ENCODE measurements at regions of chr21 and their contacts with region 1.

Region 1: DNA sequence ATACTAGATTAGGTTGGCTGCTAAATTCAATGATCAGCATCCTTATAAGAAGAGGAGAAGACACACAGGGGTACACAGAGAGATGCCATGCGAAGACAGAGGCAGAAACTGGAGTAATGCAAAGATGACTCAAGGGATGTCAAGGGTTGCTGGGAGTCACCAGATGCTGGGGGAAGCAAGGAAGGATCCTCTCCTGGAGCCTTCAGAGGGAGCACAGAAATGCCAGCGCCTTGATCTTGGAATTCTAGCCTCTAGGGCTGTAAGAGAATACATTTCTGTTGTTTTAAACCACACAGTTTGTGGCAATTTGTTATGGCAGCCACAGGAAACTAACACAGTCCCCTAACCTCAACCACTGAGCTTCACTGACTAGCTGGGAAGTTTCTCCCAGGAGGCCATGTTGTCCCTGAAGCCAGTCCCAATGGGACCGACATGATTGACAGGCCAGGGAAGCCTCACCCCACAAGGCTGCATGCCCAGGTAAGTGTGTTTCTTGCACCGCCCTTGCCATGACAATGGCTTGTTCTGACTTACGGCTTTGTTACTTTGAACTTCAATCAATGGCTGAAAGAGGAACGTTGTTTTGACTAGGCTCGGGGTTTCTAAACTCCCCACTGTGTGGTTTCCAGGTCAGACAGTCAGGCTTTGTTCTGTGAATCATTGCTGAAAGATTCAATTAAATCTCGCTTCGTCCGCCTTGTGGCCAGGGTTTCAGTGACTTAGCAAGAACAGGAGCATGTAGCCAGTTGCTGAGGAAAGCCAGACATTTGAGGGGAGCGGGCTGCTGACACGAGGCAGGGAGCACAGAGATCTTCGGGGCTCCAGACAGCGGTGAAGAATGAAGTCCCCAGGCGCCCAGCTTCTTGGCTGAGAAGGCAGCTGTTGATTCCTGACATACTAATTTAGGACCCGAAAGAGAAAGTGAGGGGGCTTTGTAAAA is 62.3 kb downstream of the RUNX1 start:
- DNase-seq: peak; percentile 90
- H3K4me3 Mint-ChIP-seq: peak overlapping the region; percentile 86
- H3K27ac Mint-ChIP-seq: peak overlapping the region; percentile 97
- H3K4me1 Mint-ChIP-seq: peaks cover 85% of the 10 kb centered on the region
- H3K27me3 Mint-ChIP-seq: no peaks in the 10 kb centered on the region

Region 2: GRCh38 chr21:34807146-34807880 is 179.5 kb before region 1 on chr21:
- intact Hi-C with region 1: loop called (anchors 5 kb)
- DNase-seq: peak; percentile 84
- H3K4me3 Mint-ChIP-seq: peak overlapping the region; percentile 57
- H3K27ac Mint-ChIP-seq: peak overlapping the region; percentile 94
- H3K4me1 Mint-ChIP-seq: peaks cover 66% of the 10 kb centered on the region
- H3K27me3 Mint-ChIP-seq: no peaks in the 10 kb centered on the region

Region 3: GRCh38 chr21:34967509-34968289 is 19.1 kb before region 1 on chr21:
- intact Hi-C with region 1: loop called (anchors 1 kb)
- DNase-seq: peak; percentile 77
- H3K4me3 Mint-ChIP-seq: peak overlapping the region; percentile 79
- H3K27ac Mint-ChIP-seq: peak overlapping the region; percentile 96
- H3K4me1 Mint-ChIP-seq: peaks cover 81% of the 10 kb centered on the region
- H3K27me3 Mint-ChIP-seq: peaks cover 9% of the 10 kb centered on the region

Region 4: GRCh38 chr21:35045542-35046262 is 58.9 kb after region 1 on chr21:
- intact Hi-C with region 1: loop called (anchors 1 kb)
- DNase-seq: peak; percentile 86
- H3K4me3 Mint-ChIP-seq: peak overlapping the region; percentile 89
- H3K27ac Mint-ChIP-seq: peak overlapping the region; percentile 94
- H3K4me1 Mint-ChIP-seq: peaks cover 96% of the 10 kb centered on the region
- H3K27me3 Mint-ChIP-seq: peaks cover 3% of the 10 kb centered on the region

Region 5: DNA sequence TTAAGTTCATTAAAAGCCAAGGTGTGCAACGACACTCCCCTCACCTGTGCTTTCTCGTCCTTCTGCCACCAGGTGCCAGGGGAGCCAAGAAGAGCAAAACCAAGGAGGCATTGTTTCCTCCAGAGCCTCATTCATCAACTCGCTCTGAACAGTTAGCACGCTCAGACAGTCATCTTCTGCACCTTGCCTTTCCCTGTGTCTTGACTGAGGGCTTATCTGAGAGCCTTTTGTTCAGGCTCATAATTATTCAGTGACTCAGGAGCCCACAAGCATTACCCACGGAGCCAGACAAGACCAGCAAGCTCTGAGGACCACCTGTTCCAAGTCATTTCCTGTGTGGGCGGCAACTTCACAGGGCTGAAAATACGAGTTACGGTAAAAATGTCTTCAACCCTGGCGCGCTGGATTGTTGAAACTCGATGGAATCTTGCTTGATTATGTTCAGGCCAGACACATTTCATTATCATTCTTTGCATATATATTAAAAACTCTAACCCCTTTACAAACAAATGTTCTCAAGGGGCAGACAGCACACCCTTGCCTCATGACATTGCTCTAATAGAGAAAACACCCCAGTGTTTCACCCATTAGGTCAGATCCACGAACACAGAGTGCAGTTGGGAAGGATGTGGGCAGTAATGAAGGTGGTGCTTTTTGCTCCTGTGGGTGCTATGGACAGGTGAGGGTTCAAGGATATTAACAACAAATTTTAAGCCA is 152.0 kb after region 1 on chr21:
- intact Hi-C with region 1: loop called (anchors 5 kb)
- DNase-seq: peak; percentile 68
- H3K4me3 Mint-ChIP-seq: peak overlapping the region; percentile 74
- H3K27ac Mint-ChIP-seq: peak overlapping the region; percentile 97
- H3K4me1 Mint-ChIP-seq: peaks cover 30% of the 10 kb centered on the region
- H3K27me3 Mint-ChIP-seq: no peaks in the 10 kb centered on the region

Region 6: DNA sequence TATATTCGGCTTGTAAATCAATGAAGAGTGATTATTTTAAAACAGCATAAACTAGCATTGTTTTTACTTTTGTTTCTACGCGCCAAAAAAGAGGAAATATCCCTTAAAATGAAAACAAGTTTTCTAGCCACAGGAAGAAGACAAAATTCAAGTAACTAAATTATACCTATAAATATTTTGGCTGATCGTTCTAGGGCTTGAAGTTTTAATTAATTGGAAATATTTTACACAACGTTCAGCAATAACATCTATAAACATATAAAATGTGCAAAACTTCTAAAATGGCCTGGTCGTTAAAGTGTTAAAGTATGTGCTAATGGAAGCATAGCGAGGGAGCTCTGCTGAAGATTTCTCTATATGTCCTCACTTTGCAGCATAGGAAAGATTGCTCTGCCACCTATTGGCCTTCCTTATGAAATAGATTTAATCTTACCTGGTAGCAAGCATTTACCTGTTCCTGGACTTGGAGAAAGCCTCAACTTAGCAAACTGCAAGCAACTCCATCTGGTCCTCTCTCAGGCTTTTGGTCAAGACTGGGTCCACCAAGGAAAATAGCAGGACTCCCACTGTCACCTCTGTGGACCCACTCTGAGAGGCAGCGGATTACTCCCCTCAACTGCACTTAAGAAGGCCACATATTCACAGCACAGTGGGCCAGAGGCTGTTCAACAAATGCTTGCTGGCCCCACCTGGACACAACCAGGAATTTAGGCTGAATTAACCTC is 413.6 kb after region 1 on chr21:
- intact Hi-C with region 1: loop called (anchors 10 kb)
- DNase-seq: peak; percentile 81
- H3K4me3 Mint-ChIP-seq: no peak overlapping the region
- H3K27ac Mint-ChIP-seq: no peak overlapping the region
- H3K4me1 Mint-ChIP-seq: peaks cover 28% of the 10 kb centered on the region
- H3K27me3 Mint-ChIP-seq: peaks cover 9% of the 10 kb centered on the region